Activated CD8-positive, alpha-beta T cell treated with anti-CD3 and anti-CD28 coated beads, Interleukin-2, amount 10 ng/mL, durations not matched to agents 7 days and 5 days (primary cell): ENCODE measurements at regions of chr7 and their contacts with region 1.

Region 1: GRCh38 chr7:99990460-99990852 is 14.6 kb upstream of the AZGP1 start:
- DNase-seq: no peak
- ATAC-seq: no peak
- H3K4me3 Mint-ChIP-seq: no peak overlapping the region
- H3K27ac Mint-ChIP-seq: no peak overlapping the region
- H3K4me1 Mint-ChIP-seq: peaks cover 8% of the 10 kb centered on the region
- H3K27me3 Mint-ChIP-seq: peaks cover 8% of the 10 kb centered on the region

Region 2: DNA sequence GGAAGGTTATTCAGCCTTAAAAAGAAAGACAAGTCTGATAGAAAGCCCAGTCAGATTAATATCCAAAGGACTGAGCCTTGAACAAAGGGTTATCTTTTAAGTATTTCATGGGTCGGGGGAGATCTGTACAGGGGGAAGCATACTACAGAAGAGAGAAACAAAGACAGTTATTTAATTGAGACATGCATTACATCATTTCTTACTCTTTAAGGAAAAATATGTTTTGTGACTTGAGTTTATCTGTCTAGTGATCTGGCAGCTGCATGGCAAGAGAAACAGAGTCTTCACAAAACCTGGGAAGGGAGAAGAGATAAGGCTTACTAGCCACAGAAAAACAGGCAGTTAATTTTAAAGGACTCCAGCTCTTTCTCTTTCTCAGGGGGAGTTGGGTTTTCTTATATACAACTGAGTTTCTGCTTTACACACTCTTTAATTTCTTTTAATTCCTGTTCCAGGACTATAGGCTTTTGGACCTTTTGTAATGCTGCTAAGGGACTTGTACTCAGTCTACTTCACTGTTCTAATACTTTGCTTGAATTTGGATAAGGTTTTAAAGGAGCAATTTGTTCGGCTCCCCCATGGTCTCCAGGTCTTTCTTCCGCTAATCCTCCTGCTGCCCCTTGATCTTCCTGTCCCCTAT is 183.5 kb before region 1 on chr7:
- CTCF ChIA-PET with region 1: no interaction called
- POLR2A ChIA-PET with region 1: no interaction called
- DNase-seq: no peak
- ATAC-seq: no peak
- H3K4me3 Mint-ChIP-seq: no peak overlapping the region
- H3K27ac Mint-ChIP-seq: no peak overlapping the region
- H3K4me1 Mint-ChIP-seq: no peaks in the 10 kb centered on the region
- H3K27me3 Mint-ChIP-seq: peaks cover 20% of the 10 kb centered on the region

Region 3: GRCh38 chr7:99975782-99976521 is 14.5 kb before region 1 on chr7 and contains the start of gene AZGP1:
- CTCF ChIA-PET with region 1: interaction called, 16 read pairs
- POLR2A ChIA-PET with region 1: no interaction called
- DNase-seq: no peak
- ATAC-seq: no peak
- H3K4me3 Mint-ChIP-seq: no peak within 1 kb of the TSS
- H3K27ac Mint-ChIP-seq: no peak within 1 kb of the TSS
- H3K4me1 Mint-ChIP-seq: peaks cover 18% of the 10 kb centered on the region
- H3K27me3 Mint-ChIP-seq: peaks cover 3% of the 10 kb centered on the region
- total RNA-seq, gene AZGP1: not detected

Region 4: DNA sequence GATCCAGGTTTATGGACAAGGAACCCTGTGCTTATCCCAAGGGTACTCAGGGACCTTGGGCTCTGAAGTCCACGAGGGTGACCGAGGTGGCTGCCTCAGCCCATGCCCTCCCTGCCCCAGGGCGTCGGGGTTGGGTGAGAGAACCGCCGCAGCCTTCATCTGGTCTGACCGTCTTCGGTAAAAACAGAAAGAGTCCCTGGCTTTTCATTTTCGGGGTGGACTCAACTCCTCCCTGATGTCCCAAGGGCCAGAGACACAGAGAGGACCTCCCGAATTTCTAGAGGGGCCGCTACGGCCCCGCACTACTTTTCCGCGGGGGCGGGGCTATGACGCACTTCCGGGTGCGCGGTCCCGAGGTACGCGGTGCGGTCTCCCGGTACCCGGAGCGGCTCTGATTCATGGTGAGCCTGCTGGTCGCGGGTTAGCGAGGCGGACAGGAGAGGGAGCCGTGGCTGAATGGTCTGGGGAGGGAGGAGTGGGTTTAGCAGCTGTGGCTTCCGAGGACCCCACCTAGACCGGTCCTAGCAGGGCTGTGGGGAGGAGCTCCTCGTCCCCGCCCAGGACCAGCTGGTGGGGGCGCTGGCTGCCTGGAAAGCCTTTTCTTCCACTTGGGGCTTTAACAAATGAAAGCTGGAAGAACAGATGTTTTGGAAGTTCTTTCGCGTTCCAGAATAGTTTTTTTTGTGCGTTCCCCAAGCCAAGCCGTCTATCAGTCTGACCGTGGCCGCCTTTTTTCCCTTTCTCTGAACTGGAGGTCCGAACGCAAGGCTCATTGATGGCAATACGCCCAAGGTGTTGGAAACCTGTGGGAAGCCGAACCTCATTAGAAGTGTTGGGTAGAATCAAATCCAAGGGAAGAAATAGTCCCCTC is 59.2 kb after region 1 on chr7 and contains the start of gene ZSCAN21:
- CTCF ChIA-PET with region 1: interaction called, 26 read pairs
- POLR2A ChIA-PET with region 1: no interaction called
- DNase-seq: peak; percentile 81
- ATAC-seq: peak; percentile 89
- H3K4me3 Mint-ChIP-seq: peak within 1 kb of the TSS; percentile 87
- H3K27ac Mint-ChIP-seq: peak within 1 kb of the TSS; percentile 95
- H3K4me1 Mint-ChIP-seq: peaks cover 17% of the 10 kb centered on the region
- H3K27me3 Mint-ChIP-seq: no peaks in the 10 kb centered on the region
- total RNA-seq, gene ZSCAN21: 5.8 to 7.5 TPM